HCT116 (cell line): ENCODE measurements at regions of chr22 and their contacts with region 1.

Region 1: GRCh38 chr22:46122511-46122971 is 27.8 kb upstream of the PPARA start:
- DNase-seq: peak; percentile 8
- ATAC-seq: peak; percentile 88
- H3K4me3 ChIP-seq: no peak overlapping the region
- H3K27ac ChIP-seq: no peak overlapping the region
- H3K4me1 ChIP-seq: peaks cover 0 to 21% of the 10 kb centered on the region in 2 experiments; a peak in 1 of 4 replicates
- H3K27me3 ChIP-seq: no peaks in the 10 kb centered on the region
- CTCF ChIP-seq: peak; percentile 88 to 94 (median 92)
- POLR2A ChIP-seq: no peak
- RAD21 ChIP-seq: peak; percentile 97

Region 2: DNA sequence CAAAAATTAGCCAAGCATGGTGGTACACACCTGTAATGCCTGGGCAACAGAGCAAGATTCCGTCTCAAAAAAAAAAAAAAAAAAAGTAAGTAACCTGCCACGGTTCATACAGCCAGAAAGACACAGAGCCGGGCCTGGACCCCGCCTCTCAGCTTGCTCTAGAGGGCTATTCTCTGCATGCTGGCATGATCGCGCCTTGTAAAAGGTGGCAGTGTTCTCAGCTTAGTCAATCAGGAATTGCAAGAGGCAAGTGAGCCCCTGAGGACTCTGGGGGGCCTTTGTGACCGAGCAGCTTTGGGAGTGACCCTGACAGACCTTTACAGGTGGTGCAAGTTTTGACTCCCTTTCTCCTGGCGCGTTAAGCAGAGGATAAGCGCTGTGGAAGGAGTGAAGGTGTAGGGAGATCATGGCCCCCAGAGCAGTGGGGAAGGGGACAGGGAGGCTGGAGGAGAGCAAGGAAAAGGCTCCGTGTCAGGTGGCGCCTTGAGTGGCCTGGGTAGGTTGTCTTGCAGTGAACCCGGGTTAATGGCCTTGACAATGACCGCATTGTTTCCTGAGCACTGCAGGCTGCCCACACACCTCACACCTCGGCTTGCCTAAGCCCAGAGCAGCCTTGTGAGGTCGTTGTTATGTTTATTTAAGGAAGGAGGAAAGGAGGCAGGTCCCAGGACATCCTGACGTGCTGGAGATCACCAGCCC is 78.7 kb after region 1 on chr22:
- CTCF ChIA-PET with region 1: no interaction called
- POLR2A ChIA-PET with region 1: no interaction called
- RAD21 ChIA-PET with region 1: no interaction called
- intact Hi-C with region 1: no loop called
- DNase-seq: peak; percentile 46
- ATAC-seq: peak; percentile 92
- H3K4me3 ChIP-seq: no peak overlapping the region
- H3K27ac ChIP-seq: no peak overlapping the region; the same call in 1 of the 2 replicates
- H3K4me1 ChIP-seq: peaks cover 12 to 14% of the 10 kb centered on the region in 2 experiments; a peak in 3 of 4 replicates
- H3K27me3 ChIP-seq: no peaks in the 10 kb centered on the region
- CTCF ChIP-seq: no peak
- POLR2A ChIP-seq: no peak
- RAD21 ChIP-seq: no peak

Region 3: DNA sequence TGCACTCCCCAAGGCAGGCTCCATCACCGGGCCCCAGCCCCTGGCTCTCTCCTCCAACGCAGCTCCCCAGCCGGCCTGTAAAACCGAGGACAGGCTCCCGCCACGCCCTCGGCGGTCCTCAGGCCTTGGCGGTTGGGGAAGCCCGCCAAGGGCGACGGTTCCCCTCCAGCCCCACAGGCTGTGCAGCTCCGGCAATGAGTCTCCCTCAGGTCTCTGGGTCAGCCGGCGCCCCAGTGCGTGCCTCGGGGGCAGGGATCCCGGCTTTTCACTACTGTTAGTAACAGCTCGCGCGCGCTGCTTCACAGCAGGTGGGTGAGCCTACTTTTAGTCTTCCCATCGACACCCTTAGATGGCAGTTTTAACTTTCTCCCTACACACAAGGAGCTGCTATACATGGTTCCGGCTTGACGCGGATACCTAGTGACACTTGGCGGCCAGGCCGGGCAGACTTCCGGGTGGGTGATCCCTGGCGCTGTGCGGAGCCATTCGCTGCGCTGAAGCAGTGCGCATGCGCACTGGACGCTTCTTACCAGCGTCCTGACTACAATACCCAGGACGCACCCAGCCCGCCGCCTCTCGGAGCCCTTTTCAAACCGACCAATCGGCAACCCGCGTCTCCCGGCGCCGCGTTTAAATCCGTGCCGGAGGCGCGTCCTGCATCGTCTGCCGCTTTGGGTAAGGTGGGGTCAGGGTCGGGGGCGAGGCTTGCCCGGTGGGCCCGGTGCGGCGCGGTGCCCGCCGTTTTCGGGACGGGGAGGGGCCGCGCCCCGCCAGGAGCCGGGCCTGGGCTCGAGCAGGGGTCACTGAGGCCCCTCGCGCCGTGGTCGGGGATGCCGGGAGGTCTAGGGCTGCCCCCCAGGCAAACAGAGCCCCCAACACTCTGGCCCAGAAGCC is 174.0 kb after region 1 on chr22 and contains the start of gene GTSE1:
- CTCF ChIA-PET with region 1: interaction called, 9 read pairs
- POLR2A ChIA-PET with region 1: interaction called, 3 read pairs
- RAD21 ChIA-PET with region 1: interaction called, 4 to 5 read pairs
- intact Hi-C with region 1: loop called (anchors 5 kb)
- DNase-seq: peak; percentile 93
- ATAC-seq: peak; percentile 97
- H3K4me3 ChIP-seq: peak within 1 kb of the TSS; percentile 83 to 95
- H3K27ac ChIP-seq: peak within 1 kb of the TSS; percentile 86
- H3K4me1 ChIP-seq: peaks cover 12 to 21% of the 10 kb centered on the region in 2 experiments; a peak in 3 of 4 replicates
- H3K27me3 ChIP-seq: no peaks in the 10 kb centered on the region
- CTCF ChIP-seq: 0 out of 6 replicates have a peak, but pooled peaks of 2 of the 3 experiments have one; percentile 8 to 12
- POLR2A ChIP-seq: peak; percentile 83
- RAD21 ChIP-seq: peak; percentile 61
- total RNA-seq, gene GTSE1: 46.1 TPM

Region 4: DNA sequence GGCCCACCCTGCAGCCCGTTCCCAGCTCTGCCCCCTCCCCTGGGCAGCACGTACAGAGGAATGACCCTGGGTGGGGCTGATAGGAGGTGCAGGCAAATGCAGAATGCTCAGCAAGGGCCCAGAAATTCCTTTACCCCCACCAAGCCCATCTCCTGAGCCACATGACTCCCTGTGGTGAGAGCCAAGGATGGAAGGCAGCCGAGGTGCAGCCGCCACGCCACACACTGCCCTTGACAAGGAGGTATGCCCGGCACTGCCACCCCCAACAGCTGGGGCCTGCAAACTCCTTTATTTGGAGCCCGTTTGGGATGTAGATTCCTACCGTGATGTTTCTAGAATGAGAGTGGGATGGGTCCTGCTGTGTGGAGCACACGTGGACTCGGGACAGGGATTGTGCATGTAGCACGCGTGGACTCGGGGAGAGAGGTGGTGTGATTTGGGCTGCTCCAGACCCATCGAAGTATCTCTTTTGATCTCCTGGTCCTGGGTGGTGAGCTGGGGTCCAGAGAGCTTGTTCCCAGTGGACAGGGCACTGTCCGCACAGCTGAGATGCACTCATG is 187.1 kb after region 1 on chr22:
- CTCF ChIA-PET with region 1: interaction called, 9 read pairs
- POLR2A ChIA-PET with region 1: no interaction called
- RAD21 ChIA-PET with region 1: no interaction called
- intact Hi-C with region 1: loop called (anchors 1 kb)
- DNase-seq: no peak
- ATAC-seq: no peak
- H3K4me3 ChIP-seq: no peak overlapping the region
- H3K27ac ChIP-seq: no peak overlapping the region
- H3K4me1 ChIP-seq: no peaks in the 10 kb centered on the region
- H3K27me3 ChIP-seq: no peaks in the 10 kb centered on the region
- CTCF ChIP-seq: no peak
- POLR2A ChIP-seq: no peak
- RAD21 ChIP-seq: no peak